ENCODE measurements at regions of chr5 and their contacts with region 1.

Region 1: GRCh38 chr5:264346-264745 is 7.1 kb upstream of the PDCD6 start:
- DNase-seq: no peak
- ATAC-seq: no peak
- H3K4me3 Mint-ChIP-seq: no peak overlapping the region
- H3K27ac Mint-ChIP-seq: no peak overlapping the region
- H3K4me1 Mint-ChIP-seq: no peaks in the 10 kb centered on the region
- H3K27me3 Mint-ChIP-seq: no peaks in the 10 kb centered on the region
- CTCF ChIP-seq: no peak

Region 2: GRCh38 chr5:278646-279045 is 14.3 kb after region 1 on chr5:
- CTCF ChIA-PET with region 1: no interaction called
- POLR2A ChIA-PET with region 1: no interaction called
- intact Hi-C with region 1: no loop called
- DNase-seq: no peak
- ATAC-seq: no peak
- H3K4me3 Mint-ChIP-seq: no peak overlapping the region
- H3K27ac Mint-ChIP-seq: no peak overlapping the region
- H3K4me1 Mint-ChIP-seq: peaks cover 31% of the 10 kb centered on the region
- H3K27me3 Mint-ChIP-seq: no peaks in the 10 kb centered on the region
- CTCF ChIP-seq: no peak

Region 3: DNA sequence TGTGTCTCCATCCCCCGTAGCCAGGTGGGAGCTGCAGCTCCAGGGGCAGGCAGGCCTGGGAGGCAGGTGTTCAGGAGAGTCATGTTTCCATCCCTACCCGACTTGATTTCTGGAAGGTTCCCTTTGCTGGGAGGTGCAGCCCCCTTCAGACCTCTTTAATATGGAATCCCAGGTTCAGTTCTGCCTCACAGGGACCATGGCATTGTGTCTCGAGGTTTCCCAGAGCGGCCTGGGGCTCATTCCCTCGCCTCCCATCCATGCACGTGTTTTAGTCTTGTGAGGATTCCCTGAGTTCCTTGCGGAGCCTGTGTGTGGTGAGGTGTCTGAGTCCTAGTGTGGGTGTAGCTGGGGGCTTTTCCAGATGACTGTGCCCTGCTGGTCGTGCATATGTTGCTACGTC is 40.7 kb after region 1 on chr5:
- CTCF ChIA-PET with region 1: no interaction called
- POLR2A ChIA-PET with region 1: interaction called, 10 read pairs
- intact Hi-C with region 1: no loop called
- DNase-seq: no peak
- ATAC-seq: no peak
- H3K4me3 Mint-ChIP-seq: no peak overlapping the region
- H3K27ac Mint-ChIP-seq: no peak overlapping the region
- H3K4me1 Mint-ChIP-seq: peaks cover 15% of the 10 kb centered on the region
- H3K27me3 Mint-ChIP-seq: no peaks in the 10 kb centered on the region
- CTCF ChIP-seq: no peak

Region 4: DNA sequence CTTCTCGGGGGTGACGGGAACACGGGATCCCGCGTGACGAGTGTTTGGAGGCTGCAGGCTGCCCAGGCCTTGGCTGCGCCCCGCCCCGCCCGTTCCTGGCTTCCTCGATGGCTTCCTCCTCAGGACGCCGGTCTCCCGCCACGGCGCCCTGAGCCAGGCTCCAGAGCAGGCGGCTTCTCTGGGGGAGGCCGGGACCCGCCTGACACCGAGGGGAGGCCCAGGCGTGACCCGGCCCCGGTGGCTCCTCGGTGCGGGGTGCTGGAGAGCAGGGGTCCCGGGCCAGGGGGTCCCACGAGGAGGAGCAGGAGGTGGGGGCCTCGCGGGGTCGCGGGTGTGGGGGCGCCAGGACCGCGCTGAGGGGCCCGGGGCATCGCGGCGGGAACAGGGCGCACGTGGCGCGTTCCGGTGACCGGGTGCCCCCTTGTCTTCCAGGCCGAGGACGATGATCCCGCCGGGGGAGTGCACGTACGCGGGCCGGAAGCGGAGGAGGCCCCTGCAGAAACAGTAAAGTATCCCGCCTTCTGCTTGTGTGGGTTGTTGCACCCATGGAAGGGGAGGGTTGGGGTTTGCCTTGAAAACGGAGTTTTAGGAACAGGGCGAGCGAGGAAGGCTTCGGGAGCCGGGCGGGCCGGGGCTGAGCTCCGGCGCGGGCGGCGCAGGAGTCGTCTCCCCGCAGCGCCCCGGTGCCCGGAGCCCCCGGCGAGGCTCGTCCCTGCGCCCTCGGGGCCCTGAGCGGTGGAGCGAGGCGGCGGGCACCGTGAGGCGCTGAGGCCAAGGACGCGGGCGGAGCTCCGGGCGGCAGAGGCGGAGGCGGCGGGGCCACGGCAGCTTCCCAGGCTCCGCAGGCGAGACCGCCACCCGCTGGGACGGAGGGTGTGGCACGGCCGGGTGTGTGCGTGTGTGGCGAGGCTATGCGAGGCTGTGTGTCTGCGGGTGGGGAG is 79.4 kb after region 1 on chr5:
- CTCF ChIA-PET with region 1: no interaction called
- POLR2A ChIA-PET with region 1: no interaction called
- intact Hi-C with region 1: no loop called
- DNase-seq: no peak
- ATAC-seq: peak; percentile 42
- H3K4me3 Mint-ChIP-seq: peak overlapping the region; percentile 61
- H3K27ac Mint-ChIP-seq: no peak overlapping the region
- H3K4me1 Mint-ChIP-seq: peaks cover 6% of the 10 kb centered on the region
- H3K27me3 Mint-ChIP-seq: peaks cover 50% of the 10 kb centered on the region
- CTCF ChIP-seq: no peak

Measured in activated B cell treated with CpG ODN at 0.5 μM for 24 hours (primary cell).